Activated T-helper 2 cell treated with anti-CD3 and anti-CD28 coated beads, Interferon-gamma antibody, Interleukin-2, Interleukin-4, amounts not matched to agents 10 μg/mL and 5 μg/mL and 100 μg/mL, durations not matched to agents 14 hours and 24 hours and 36 hours (primary cell): ENCODE measurements at regions of chr2 and their contacts with region 1.

Region 1: DNA sequence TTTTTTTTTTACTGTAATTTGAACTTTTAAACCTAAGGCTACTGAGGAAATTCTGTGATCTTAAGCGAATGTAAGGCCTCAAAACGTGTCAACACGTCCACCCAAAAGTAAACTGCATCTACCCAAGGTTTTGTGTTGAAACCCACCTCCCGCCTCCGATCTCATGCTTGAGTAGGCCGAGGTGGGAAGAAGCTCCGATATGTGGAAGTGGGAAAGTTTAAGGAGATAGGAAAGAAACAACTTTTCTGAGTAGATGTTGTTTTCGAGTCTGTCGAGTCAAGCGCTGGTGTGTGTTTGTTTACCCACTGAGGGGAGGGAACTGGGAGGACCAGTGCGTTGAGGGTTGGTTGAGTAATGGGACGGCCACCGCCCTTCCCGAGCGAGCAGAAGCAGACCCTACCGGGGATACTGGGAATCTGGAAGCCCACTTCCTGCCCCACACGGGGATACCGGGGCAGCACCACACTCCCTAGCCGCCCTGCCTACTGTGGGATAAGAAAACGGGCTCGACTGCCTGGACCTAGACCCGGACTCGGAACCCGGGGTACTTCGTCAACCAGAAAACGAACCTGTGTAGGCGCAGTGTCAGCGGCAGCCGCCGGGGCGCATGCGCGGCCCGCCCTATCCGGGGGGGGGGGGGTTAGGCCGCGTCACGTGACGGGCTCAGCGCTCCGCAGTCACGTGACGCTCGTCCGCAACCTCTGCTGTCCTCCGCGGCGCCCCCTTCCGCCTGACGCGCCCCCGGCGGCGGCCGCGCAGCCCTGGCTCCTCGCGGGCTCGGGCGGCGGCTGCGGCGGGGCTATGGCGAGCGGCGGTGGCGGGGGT is at the start of gene RETREG2:
- DNase-seq: peak; percentile 79
- H3K4me3 Mint-ChIP-seq: peak within 1 kb of the TSS; percentile 94
- H3K27ac Mint-ChIP-seq: peak within 1 kb of the TSS; percentile 98
- H3K4me1 Mint-ChIP-seq: peaks cover 38% of the 10 kb centered on the region
- H3K27me3 Mint-ChIP-seq: no peaks in the 10 kb centered on the region
- total RNA-seq, gene RETREG2: 52.5 and 57.4 TPM in 2 replicates

Region 2: DNA sequence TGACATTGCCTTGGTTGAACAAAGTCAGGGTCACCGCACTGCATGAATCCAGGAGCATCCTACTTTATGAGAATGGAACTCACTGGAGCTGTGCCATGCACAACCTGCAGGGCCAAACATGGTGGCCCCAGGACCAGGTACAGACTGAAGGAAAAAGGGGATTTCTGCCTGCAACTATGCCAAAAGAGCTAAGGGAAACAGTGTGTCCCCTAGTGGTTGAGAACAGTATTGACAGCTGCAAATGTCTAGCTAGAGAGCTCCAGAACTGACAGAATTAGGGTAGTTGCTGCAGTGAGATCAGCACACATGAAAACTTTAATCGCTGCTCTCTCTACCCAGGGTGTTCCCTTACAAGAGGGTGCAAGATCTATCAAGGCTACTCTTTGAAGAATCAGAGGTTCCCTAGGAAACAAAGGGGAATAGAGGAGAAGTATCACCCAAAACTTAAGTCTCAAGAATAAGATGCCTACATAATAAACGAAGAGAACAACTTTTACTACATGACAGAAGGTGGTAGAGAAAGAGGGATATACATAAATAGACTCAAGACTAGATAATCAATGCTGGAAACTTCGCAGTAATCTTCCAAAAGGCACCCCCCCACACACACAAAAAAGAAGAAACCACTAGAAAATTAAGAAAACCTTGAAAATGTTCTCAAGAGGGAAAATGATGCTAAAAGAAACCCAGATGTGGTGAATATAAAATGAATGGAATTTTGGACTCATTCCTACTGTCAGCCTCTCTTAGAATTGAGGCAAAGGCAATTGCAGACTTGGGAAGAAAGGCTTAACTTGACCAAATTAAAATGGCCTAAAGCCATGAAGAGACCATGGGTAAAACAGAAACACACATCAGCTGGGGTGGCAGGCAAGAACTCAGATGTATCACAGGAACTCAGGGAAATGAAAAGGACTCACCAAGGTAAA is 73.4 kb before region 1 on chr2:
- intact Hi-C with region 1: no loop called
- DNase-seq: no peak
- H3K4me3 Mint-ChIP-seq: no peak overlapping the region
- H3K27ac Mint-ChIP-seq: peak overlapping the region; percentile 5
- H3K4me1 Mint-ChIP-seq: peaks cover 10% of the 10 kb centered on the region
- H3K27me3 Mint-ChIP-seq: no peaks in the 10 kb centered on the region

Region 3: GRCh38 chr2:219160186-219161017 is 17.4 kb before region 1 on chr2 and contains the start of gene NHEJ1:
- intact Hi-C with region 1: loop called (anchors 1 kb)
- DNase-seq: peak; percentile 90
- H3K4me3 Mint-ChIP-seq: peak within 1 kb of the TSS; percentile 87
- H3K27ac Mint-ChIP-seq: peak within 1 kb of the TSS; percentile 93
- H3K4me1 Mint-ChIP-seq: peaks cover 17% of the 10 kb centered on the region
- H3K27me3 Mint-ChIP-seq: no peaks in the 10 kb centered on the region
- total RNA-seq, gene NHEJ1: 15.9 and 22.9 TPM in 2 replicates

Region 4: GRCh38 chr2:219229305-219230058 is 51.7 kb after region 1 on chr2 and contains the starts of genes ANKZF1 and ATG9A:
- intact Hi-C with region 1: loop called (anchors 1 kb)
- DNase-seq: peak; percentile 99
- H3K4me3 Mint-ChIP-seq: peak within 1 kb of the TSS; percentile 97
- H3K27ac Mint-ChIP-seq: peak within 1 kb of the TSS; percentile 99
- H3K4me1 Mint-ChIP-seq: peaks cover 33% of the 10 kb centered on the region
- H3K27me3 Mint-ChIP-seq: no peaks in the 10 kb centered on the region
- total RNA-seq, gene ANKZF1: 133 and 142 TPM in 2 replicates
- total RNA-seq, gene ATG9A: 53.1 and 60.5 TPM in 2 replicates

Region 5: DNA sequence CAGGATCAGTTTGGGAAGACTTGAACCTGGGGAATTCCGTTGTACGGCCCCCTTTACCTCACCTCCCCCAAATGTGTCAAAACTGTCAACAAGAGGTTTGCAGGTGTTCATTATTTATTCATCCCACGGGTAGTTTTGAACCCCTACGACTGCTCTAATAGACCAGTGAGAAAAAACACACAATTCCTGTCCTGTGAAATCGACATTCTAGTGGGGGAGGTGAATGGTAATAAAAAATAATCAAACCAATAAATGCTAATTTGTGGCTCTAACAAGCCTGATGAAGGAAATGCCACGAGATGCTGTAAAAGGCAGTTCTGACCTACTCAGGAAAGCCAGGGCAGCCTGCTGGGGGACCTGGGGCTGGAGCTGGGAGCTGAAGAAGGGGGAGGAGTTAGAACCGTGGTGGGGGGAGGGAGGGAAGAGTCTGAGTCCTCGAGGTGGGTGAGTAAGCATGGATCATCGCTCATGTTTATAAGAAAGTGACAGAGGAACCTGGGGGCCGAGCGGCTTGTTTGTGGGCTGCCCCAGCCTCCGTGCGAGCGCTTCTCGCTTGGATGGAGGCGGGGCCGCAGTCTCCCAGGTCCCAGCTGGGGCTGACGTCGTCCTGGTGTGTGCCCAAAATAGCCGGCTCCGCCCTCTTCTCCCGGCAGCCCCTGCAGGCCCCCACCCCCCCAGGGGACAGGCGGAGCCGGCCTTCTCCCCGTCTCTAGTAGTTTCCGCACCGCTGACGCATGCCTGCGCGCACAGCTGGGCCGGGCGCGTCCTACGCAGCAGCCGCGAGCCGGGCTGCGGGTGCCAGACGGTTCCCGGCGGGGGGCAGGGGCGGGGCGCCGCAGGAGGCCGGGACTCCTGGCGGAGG is 101.1 kb after region 1 on chr2 and contains the start of gene DNAJB2:
- intact Hi-C with region 1: loop called (anchors 1 kb)
- DNase-seq: peak; percentile 98
- H3K4me3 Mint-ChIP-seq: peak within 1 kb of the TSS; percentile 85
- H3K27ac Mint-ChIP-seq: peak within 1 kb of the TSS; percentile 91
- H3K4me1 Mint-ChIP-seq: peaks cover 39% of the 10 kb centered on the region
- H3K27me3 Mint-ChIP-seq: peaks cover 3% of the 10 kb centered on the region
- total RNA-seq, gene DNAJB2: 49.8 and 55.6 TPM in 2 replicates

Region 6: GRCh38 chr2:219543601-219544358 is 366.0 kb after region 1 on chr2 and contains the starts of genes CHPF and TMEM198:
- intact Hi-C with region 1: loop called (anchors 10 kb)
- DNase-seq: peak; percentile 93
- H3K4me3 Mint-ChIP-seq: peak within 1 kb of the TSS; percentile 91
- H3K27ac Mint-ChIP-seq: peak within 1 kb of the TSS; percentile 71
- H3K4me1 Mint-ChIP-seq: peaks cover 11% of the 10 kb centered on the region
- H3K27me3 Mint-ChIP-seq: peaks cover 16% of the 10 kb centered on the region
- total RNA-seq, gene CHPF: 40.2 and 41.9 TPM in 2 replicates
- total RNA-seq, gene TMEM198: 3.8 and 4.9 TPM in 2 replicates

Region 7: DNA sequence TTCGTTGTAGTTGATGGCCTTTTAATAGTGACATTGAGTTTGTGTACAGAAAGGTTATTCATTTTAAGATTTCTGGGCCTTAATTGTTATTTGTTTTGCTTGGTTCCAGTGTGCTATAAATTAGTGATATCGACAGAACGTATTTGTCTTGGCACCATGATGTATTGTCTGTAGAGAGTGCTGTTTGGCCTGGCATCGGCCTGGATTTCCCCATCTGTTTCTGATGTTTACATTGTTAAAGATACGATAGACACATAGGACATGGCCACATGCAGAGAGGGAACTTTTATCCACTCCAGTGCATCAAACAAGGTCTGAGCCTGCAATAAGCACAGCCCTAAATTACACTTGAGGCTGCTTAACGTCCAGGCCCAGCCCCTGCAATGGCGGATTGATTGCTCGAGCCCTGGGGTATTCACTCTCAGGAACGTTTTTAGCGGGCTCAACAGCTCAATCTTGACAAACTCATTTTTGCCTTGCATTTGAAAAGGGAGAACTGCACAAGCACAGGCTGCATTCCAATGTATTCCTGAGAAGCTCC is 594.4 kb after region 1 on chr2:
- intact Hi-C with region 1: no loop called
- DNase-seq: no peak
- H3K4me3 Mint-ChIP-seq: no peak overlapping the region
- H3K27ac Mint-ChIP-seq: no peak overlapping the region
- H3K4me1 Mint-ChIP-seq: no peaks in the 10 kb centered on the region
- H3K27me3 Mint-ChIP-seq: no peaks in the 10 kb centered on the region